Calu3 (cell line): ENCODE measurements at regions of chrX and their contacts with region 1.

Region 1: DNA sequence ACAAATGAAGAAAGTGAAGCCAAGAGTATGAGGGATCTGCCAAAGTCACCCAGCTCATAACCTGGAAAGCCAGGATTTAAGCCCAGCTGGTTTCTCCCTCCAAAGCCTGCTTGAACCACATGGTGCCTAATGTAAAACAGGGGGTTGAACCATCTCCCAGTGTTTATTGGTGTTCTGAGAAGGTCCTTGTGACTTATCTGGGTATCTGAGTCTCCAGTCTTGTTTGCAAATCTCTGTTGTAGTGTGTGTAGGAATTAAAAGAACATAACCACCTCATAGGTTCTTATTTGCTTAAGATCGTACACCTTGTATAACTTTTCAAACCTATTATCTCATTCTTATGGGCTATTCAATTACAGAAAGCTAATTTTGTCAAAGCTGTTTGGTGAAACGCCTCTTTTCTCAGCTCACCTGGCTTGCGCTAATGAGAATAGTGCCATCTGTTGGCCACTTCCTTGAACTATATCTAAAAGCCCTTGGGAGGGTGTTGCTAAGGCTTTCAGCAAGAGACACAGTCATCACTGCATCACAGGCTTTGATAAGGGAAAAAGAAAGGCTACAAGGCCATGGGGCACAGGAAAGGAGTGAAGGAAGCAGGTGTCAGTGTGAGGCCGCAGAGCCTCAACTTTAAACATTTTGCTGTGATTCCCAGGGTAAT is 34.0 kb downstream of the ETDB start:
- DNase-seq: peak; percentile 55
- H3K4me3 Mint-ChIP-seq: no peak overlapping the region
- H3K27ac Mint-ChIP-seq: peak overlapping the region; percentile 32
- H3K4me1 Mint-ChIP-seq: peaks cover 9% of the 10 kb centered on the region
- H3K27me3 Mint-ChIP-seq: no peaks in the 10 kb centered on the region
- CTCF ChIP-seq: peak; percentile 20

Region 2: GRCh38 chrX:134969726-134970125 is 116.6 kb before region 1 on chrX:
- CTCF ChIA-PET with region 1: no interaction called
- intact Hi-C with region 1: loop called (anchors 5 kb)
- DNase-seq: no peak
- H3K4me3 Mint-ChIP-seq: no peak overlapping the region
- H3K27ac Mint-ChIP-seq: no peak overlapping the region
- H3K4me1 Mint-ChIP-seq: peaks cover 8% of the 10 kb centered on the region
- H3K27me3 Mint-ChIP-seq: peaks cover 12% of the 10 kb centered on the region
- CTCF ChIP-seq: no peak

Region 3: GRCh38 chrX:134990801-134991481 is 95.4 kb before region 1 on chrX and contains the start of gene SMIM10:
- CTCF ChIA-PET with region 1: no interaction called
- intact Hi-C with region 1: no loop called
- DNase-seq: peak; percentile 75
- H3K4me3 Mint-ChIP-seq: peak within 1 kb of the TSS; percentile 76
- H3K27ac Mint-ChIP-seq: peak within 1 kb of the TSS; percentile 35
- H3K4me1 Mint-ChIP-seq: peaks cover 23% of the 10 kb centered on the region
- H3K27me3 Mint-ChIP-seq: no peaks in the 10 kb centered on the region
- CTCF ChIP-seq: no peak
- total RNA-seq, gene SMIM10: 1.8 and 2.4 TPM in 2 replicates

Region 4: DNA sequence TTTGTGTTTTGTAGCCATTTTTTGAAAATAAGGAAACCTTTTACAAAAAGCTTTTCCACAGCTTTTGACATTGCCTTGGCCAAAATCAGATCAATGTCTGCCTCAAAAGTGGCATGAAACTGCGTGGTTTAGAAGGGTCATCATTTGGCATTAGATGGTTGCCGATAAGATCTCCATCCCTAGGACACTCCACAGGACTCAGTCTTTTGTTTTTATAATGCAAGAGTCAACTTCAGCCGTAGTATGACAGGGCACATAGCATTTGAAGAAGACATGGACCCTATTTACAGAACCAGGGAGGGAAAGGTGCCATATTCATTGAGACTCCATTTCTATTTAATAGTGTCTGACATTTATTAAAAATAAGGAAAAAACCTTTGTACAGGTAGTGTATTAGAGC is 35.7 kb before region 1 on chrX:
- CTCF ChIA-PET with region 1: no interaction called
- intact Hi-C with region 1: no loop called
- DNase-seq: no peak
- H3K4me3 Mint-ChIP-seq: peak overlapping the region; percentile 87
- H3K27ac Mint-ChIP-seq: peak overlapping the region; percentile 75
- H3K4me1 Mint-ChIP-seq: peaks cover 18% of the 10 kb centered on the region
- H3K27me3 Mint-ChIP-seq: no peaks in the 10 kb centered on the region
- CTCF ChIP-seq: no peak